Activated CD8-positive, alpha-beta T cell treated with anti-CD3 and anti-CD28 coated beads for 36 hours (primary cell): ENCODE measurements at regions of chr6 and their contacts with region 1.

Region 1: DNA sequence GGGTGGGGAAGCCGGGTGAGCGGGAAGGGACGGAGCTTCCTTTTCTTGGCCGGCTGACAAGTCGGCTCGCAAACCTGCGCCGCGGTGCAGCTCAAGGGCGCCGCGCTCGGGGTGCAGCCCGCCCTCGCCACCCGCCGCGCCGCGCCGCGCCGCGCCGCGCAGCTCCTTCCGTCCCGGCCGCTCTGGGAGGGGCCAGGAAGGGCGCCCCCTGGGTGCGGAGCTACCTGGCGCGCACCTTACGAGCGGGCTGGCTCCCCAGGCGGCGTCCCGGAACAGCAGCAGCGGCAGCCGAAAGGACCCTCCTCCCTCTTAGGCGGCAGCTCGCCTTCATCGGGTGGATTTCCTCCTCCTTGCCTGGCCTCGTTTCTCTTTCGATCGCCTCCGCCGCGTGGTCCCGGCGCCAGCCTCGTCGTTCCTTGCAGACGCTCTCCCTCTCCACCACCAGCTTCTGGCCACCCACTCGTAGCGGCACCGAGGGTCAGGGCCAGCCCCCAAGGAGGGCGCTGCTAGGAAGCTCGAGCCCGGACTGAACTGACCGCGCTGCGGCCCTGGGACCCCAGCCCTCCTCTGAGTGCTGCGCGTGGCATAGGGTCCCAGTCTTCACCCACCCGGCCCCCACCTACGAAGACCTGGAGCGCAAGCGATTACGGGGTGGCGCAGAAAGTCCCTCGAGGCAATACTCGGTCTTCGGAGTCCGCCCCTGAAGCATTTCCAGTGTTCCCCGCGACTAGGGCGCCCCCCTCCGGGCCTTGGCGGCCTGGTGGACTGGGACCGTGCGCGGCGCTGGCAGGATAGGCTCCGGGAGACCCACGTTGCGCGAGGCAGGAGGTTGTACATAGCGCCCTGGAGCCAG is at the start of gene MAP3K5:
- DNase-seq: peak; percentile 96
- ATAC-seq: peak; percentile 79
- H3K4me3 Mint-ChIP-seq: peak within 1 kb of the TSS; percentile 83
- H3K27ac Mint-ChIP-seq: peak within 1 kb of the TSS; percentile 96
- H3K4me1 Mint-ChIP-seq: peaks cover 34% of the 10 kb centered on the region
- H3K27me3 Mint-ChIP-seq: no peaks in the 10 kb centered on the region
- CTCF ChIP-seq: peak; percentile 69
- total RNA-seq, gene MAP3K5: 4.4 to 4.6 TPM

Region 2: DNA sequence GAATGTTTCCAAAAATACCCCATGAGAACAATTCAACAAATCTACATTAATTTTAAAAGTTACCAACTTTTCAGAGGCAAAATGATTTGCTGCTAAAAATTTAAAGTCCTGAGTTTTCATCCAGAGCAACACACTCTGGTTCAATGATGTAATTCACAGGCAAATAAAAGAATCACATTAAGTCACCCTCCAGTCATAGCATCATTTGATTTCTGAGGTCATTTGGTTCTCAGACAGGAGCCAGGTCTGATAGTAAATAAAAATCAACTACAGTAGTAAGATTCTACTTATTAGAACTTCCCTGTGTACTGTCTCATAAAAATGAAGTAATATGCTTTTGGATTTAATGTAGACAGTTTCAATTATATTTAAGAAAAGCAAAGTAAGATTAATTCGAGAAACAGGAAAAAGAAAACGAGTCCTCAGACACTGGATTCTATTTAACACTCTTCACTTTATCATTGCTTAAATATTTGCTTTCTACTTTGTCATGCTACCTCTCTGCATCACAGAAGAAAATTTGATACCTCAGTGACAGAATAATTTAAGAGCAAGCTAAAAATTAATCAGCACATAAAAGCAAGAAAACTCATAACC is 268.2 kb before region 1 on chr6:
- CTCF ChIA-PET with region 1: no interaction called
- POLR2A ChIA-PET with region 1: no interaction called
- intact Hi-C with region 1: no loop called
- DNase-seq: no peak
- ATAC-seq: no peak
- H3K4me3 Mint-ChIP-seq: no peak overlapping the region
- H3K27ac Mint-ChIP-seq: no peak overlapping the region
- H3K4me1 Mint-ChIP-seq: peaks cover 19% of the 10 kb centered on the region
- H3K27me3 Mint-ChIP-seq: peaks cover 15% of the 10 kb centered on the region
- CTCF ChIP-seq: no peak

Region 3: GRCh38 chr6:136593748-136594490 is 198.7 kb before region 1 on chr6:
- CTCF ChIA-PET with region 1: interaction called, 10 read pairs
- POLR2A ChIA-PET with region 1: no interaction called
- intact Hi-C with region 1: no loop called
- DNase-seq: peak; percentile 78
- ATAC-seq: peak; percentile 92
- H3K4me3 Mint-ChIP-seq: peak overlapping the region; percentile 56
- H3K27ac Mint-ChIP-seq: peak overlapping the region; percentile 92
- H3K4me1 Mint-ChIP-seq: peaks cover 24% of the 10 kb centered on the region
- H3K27me3 Mint-ChIP-seq: no peaks in the 10 kb centered on the region
- CTCF ChIP-seq: no peak

Region 4: GRCh38 chr6:136628996-136629395 is 163.6 kb before region 1 on chr6:
- CTCF ChIA-PET with region 1: interaction called, 12 read pairs
- POLR2A ChIA-PET with region 1: no interaction called
- intact Hi-C with region 1: no loop called
- DNase-seq: no peak
- ATAC-seq: peak; percentile 42
- H3K4me3 Mint-ChIP-seq: no peak overlapping the region
- H3K27ac Mint-ChIP-seq: no peak overlapping the region
- H3K4me1 Mint-ChIP-seq: peaks cover 10% of the 10 kb centered on the region
- H3K27me3 Mint-ChIP-seq: no peaks in the 10 kb centered on the region
- CTCF ChIP-seq: no peak

Region 5: GRCh38 chr6:136723780-136724179 is 68.9 kb before region 1 on chr6:
- CTCF ChIA-PET with region 1: interaction called, 31 read pairs
- POLR2A ChIA-PET with region 1: interaction called, 3 read pairs
- intact Hi-C with region 1: loop called (anchors 10 kb)
- DNase-seq: peak; percentile 73
- ATAC-seq: peak; percentile 80
- H3K4me3 Mint-ChIP-seq: peak overlapping the region; percentile 27
- H3K27ac Mint-ChIP-seq: peak overlapping the region; percentile 1
- H3K4me1 Mint-ChIP-seq: peaks cover 29% of the 10 kb centered on the region
- H3K27me3 Mint-ChIP-seq: no peaks in the 10 kb centered on the region
- CTCF ChIP-seq: no peak

Region 6: DNA sequence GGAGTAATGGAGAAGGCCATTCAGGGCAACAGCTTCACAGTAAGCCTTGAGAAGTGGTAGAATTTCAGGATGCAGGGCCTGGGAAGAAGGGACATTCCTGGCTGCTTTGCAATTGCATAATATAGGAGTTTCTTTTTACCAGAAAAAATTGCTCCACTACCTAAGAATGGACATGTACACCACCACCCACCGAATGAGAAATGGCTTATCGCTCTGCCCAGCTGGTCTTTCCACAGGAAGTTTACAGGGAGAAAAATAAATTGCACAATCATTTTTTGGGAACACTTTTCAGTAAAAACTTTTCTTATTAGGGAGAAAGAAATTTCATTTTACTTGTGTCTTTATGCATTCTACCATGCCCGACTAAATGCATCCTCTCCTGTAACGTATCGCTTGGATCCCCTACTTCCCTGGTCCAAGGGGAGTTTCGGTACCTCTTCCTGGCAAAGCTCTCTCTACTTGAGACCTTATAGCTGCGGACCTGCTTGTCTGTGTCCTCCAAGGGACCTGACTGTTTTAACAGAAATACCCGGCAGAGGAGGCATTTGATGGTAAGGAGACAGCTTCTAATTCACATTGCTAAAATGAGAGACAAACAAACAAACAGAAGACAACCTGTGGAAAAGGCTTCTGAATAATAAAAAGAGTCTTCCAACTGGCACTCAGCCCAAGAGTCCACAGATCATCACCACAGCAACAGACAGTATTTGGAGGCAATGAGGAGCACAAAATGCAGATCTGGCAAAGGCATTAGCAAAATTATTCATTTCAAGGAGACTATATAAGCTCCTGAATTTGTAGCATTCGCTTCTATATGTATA is 54.6 kb before region 1 on chr6:
- CTCF ChIA-PET with region 1: interaction called, 38 read pairs
- POLR2A ChIA-PET with region 1: interaction called, 9 read pairs
- intact Hi-C with region 1: no loop called
- DNase-seq: no peak
- ATAC-seq: no peak
- H3K4me3 Mint-ChIP-seq: no peak overlapping the region
- H3K27ac Mint-ChIP-seq: peak overlapping the region; percentile 4
- H3K4me1 Mint-ChIP-seq: peaks cover 14% of the 10 kb centered on the region
- H3K27me3 Mint-ChIP-seq: no peaks in the 10 kb centered on the region
- CTCF ChIP-seq: no peak

Region 7: DNA sequence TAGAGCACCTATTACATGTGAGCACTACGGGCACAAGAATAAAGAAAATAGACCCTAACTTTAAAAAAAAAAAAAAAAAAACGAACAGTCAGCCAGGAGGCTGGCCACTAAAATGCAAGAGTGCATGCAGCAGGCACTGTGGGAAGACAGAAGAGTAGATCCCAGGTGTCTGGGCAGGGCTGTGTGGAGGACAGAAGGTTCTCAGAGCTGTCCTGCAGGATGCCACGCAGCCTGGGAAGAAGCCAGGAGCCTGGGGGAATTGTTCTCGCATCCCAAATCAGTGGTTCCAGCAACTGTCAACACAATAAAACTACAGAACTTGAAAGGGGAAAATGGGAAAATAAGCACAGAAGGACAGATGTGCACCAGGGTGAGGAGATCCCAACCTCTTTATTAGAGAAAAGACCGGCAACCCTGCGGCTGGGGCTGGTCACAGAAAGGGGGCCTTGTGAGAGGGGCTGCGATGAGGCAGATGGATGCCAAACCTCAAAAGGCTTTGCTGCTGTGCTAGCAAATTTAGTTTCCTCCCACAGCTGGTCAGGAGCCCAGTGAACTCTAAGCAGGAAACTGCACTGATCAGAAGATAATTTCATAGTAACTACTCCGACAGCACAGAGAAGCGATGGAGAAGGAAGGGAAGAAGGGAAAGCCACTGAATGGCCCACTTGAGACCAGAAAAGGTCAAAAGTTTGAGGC is 31.3 kb before region 1 on chr6:
- CTCF ChIA-PET with region 1: interaction called, 56 read pairs
- POLR2A ChIA-PET with region 1: interaction called, 18 read pairs
- intact Hi-C with region 1: no loop called
- DNase-seq: peak; percentile 42
- ATAC-seq: peak; percentile 37
- H3K4me3 Mint-ChIP-seq: peak overlapping the region; percentile 52
- H3K27ac Mint-ChIP-seq: peak overlapping the region; percentile 52
- H3K4me1 Mint-ChIP-seq: peaks cover 62% of the 10 kb centered on the region
- H3K27me3 Mint-ChIP-seq: no peaks in the 10 kb centered on the region
- CTCF ChIP-seq: no peak

Region 8: GRCh38 chr6:136803608-136804007 is 11.0 kb after region 1 on chr6:
- CTCF ChIA-PET with region 1: interaction called, 14 read pairs
- POLR2A ChIA-PET with region 1: no interaction called
- intact Hi-C with region 1: no loop called
- DNase-seq: no peak
- ATAC-seq: no peak
- H3K4me3 Mint-ChIP-seq: no peak overlapping the region
- H3K27ac Mint-ChIP-seq: no peak overlapping the region
- H3K4me1 Mint-ChIP-seq: no peaks in the 10 kb centered on the region
- H3K27me3 Mint-ChIP-seq: peaks cover 3% of the 10 kb centered on the region
- CTCF ChIP-seq: no peak